Naive thymus-derived CD8-positive, alpha-beta T cell (primary cell): ENCODE measurements at regions of chr1 and their contacts with region 1.

Region 1: GRCh38 chr1:160580221-160580812 is 1.0 kb upstream of the CD84 start:
- DNase-seq: no peak
- ATAC-seq: no peak
- H3K4me3 Mint-ChIP-seq: peak overlapping the region in 9 of 10 donors; percentile 11 to 55 (median 44)
- H3K27ac Mint-ChIP-seq: peak overlapping the region; percentile 70 to 97 (median 86)
- H3K4me1 Mint-ChIP-seq: peaks cover 33 to 83% (median 75%) of the 10 kb centered on the region in 4 donors
- H3K27me3 Mint-ChIP-seq: no peaks in the 10 kb centered on the region

Region 2: GRCh38 chr1:160567858-160568682 is 12.2 kb before region 1 on chr1:
- POLR2A ChIA-PET with region 1: interaction called, 48 read pairs
- DNase-seq: peak; percentile 19 to 86 (median 66)
- ATAC-seq: peak; percentile 96 to 97
- H3K4me3 Mint-ChIP-seq: peak overlapping the region; percentile 49 to 85 (median 71)
- H3K27ac Mint-ChIP-seq: peak overlapping the region; percentile 84 to 100 (median 97)
- H3K4me1 Mint-ChIP-seq: peaks cover 53 to 95% (median 92%) of the 10 kb centered on the region in 4 donors
- H3K27me3 Mint-ChIP-seq: no peaks in the 10 kb centered on the region

Region 3: DNA sequence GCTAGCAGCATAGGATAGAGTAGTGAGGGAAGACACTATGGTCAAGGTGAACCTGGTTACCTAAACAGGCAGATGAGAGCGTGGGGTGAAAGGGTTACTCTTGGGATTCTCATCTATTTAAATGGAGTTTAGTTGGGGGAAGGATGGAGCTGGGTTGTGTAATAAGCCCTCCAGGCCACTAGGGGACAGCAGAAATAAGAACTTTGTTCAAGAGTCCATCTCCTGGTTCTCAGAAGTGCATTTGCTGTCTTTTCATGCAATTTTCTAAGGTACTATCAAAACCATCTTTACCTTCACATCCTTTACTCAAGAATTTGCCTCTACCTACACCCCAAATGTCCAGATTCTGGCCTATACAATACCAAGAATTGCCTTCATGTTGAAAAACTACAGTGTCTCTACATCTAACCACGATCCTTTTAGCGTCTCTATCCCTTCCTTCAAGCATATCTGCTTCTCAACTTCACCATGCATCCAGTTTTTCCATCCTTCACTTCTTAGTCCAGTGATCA is 38.5 kb after region 1 on chr1:
- POLR2A ChIA-PET with region 1: no interaction called
- DNase-seq: peak in 7 of 10 donors; percentile 25 to 65 (median 39)
- ATAC-seq: peak; percentile 58 to 63
- H3K4me3 Mint-ChIP-seq: no peak overlapping the region
- H3K27ac Mint-ChIP-seq: peak overlapping the region in 8 of 10 donors; percentile 17 to 68 (median 43)
- H3K4me1 Mint-ChIP-seq: peaks cover 27 to 67% (median 45%) of the 10 kb centered on the region in 4 donors
- H3K27me3 Mint-ChIP-seq: no peaks in the 10 kb centered on the region

Region 4: GRCh38 chr1:160629286-160630210 is 49.2 kb after region 1 on chr1:
- POLR2A ChIA-PET with region 1: no interaction called
- DNase-seq: peak; percentile 53 to 92 (median 84)
- ATAC-seq: peak; percentile 80 to 90
- H3K4me3 Mint-ChIP-seq: peak overlapping the region; percentile 72 to 90 (median 84)
- H3K27ac Mint-ChIP-seq: peak overlapping the region; percentile 94 to 100 (median 99)
- H3K4me1 Mint-ChIP-seq: peaks cover 57 to 100% (median 96%) of the 10 kb centered on the region in 4 donors
- H3K27me3 Mint-ChIP-seq: no peaks in the 10 kb centered on the region

Region 5: GRCh38 chr1:160821628-160822027 is 241.3 kb after region 1 on chr1:
- POLR2A ChIA-PET with region 1: no interaction called
- DNase-seq: no peak
- ATAC-seq: no peak
- H3K4me3 Mint-ChIP-seq: no peak overlapping the region
- H3K27ac Mint-ChIP-seq: peak overlapping the region; percentile 6 to 91 (median 74)
- H3K4me1 Mint-ChIP-seq: peaks cover 5 to 24% (median 8%) of the 10 kb centered on the region in 4 donors
- H3K27me3 Mint-ChIP-seq: no peaks in the 10 kb centered on the region